Activated CD8-positive, alpha-beta memory T cell treated with anti-CD3 and anti-CD28 coated beads, Interleukin-2, amount 10 ng/mL, durations not matched to agents 7 days and 5 days (primary cell): ENCODE measurements at regions of chr9 and their contacts with region 1.

Region 1: GRCh38 chr9:84174486-84174885 is 166.1 kb downstream of the SLC28A3 start:
- DNase-seq: no peak
- ATAC-seq: no peak
- H3K4me3 Mint-ChIP-seq: no peak overlapping the region
- H3K27ac Mint-ChIP-seq: no peak overlapping the region
- H3K4me1 Mint-ChIP-seq: no peaks in the 10 kb centered on the region
- H3K27me3 Mint-ChIP-seq: peaks cover 5% of the 10 kb centered on the region

Region 2: GRCh38 chr9:83920927-83921707 is 253.4 kb before region 1 on chr9 and contains the start of gene KIF27:
- CTCF ChIA-PET with region 1: interaction called, 11 read pairs
- DNase-seq: peak; percentile 98
- ATAC-seq: peak; percentile 92
- H3K4me3 Mint-ChIP-seq: peak within 1 kb of the TSS; percentile 78
- H3K27ac Mint-ChIP-seq: peak within 1 kb of the TSS; percentile 86
- H3K4me1 Mint-ChIP-seq: peaks cover 8% of the 10 kb centered on the region
- H3K27me3 Mint-ChIP-seq: no peaks in the 10 kb centered on the region
- total RNA-seq, gene KIF27: 2.0 to 2.2 TPM

Region 3: DNA sequence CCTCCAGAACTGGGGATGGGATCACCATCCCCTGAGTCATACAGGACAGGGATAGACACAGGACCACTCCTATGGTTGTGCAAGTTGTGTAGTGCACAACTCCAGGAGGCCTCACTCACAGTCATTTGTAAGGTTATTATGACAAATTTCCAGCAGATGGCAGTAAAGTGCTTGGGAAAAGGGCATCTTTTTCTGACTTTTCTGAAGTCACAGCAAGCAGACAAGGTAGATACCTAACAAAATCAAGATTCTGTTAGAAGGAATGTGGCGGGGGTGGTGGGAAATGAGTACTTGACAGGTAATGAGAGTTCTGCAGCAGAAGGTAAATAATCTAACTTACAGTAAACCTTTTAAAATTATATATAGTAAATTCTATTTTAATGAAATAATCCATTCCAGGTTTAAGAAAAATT is 236.6 kb before region 1 on chr9:
- CTCF ChIA-PET with region 1: interaction called, 10 read pairs
- DNase-seq: peak; percentile 50
- ATAC-seq: peak; percentile 80
- H3K4me3 Mint-ChIP-seq: no peak overlapping the region
- H3K27ac Mint-ChIP-seq: no peak overlapping the region
- H3K4me1 Mint-ChIP-seq: no peaks in the 10 kb centered on the region
- H3K27me3 Mint-ChIP-seq: no peaks in the 10 kb centered on the region

Region 4: DNA sequence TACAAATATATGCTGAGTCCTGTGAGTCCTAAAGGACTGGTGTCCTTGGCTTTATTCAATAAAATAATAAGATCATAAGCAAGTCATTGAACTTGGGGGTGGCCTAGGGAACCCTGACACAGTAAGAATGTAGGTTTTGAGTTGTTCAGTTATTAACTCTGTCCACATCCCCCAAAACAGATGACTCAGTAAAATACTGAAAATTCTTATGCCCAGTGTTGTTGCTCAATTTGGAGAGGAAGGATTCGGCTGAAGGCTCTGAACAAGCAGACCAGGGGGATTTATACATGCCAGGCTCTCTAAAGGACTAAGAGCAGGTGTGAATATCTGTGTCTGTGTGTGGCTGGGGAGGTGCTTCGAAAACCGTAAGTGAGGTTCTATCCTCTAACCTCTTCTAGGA is 20.2 kb before region 1 on chr9:
- CTCF ChIA-PET with region 1: interaction called, 15 read pairs
- DNase-seq: no peak
- ATAC-seq: no peak
- H3K4me3 Mint-ChIP-seq: no peak overlapping the region
- H3K27ac Mint-ChIP-seq: no peak overlapping the region
- H3K4me1 Mint-ChIP-seq: no peaks in the 10 kb centered on the region
- H3K27me3 Mint-ChIP-seq: peaks cover 32% of the 10 kb centered on the region